HEK293 (cell line): ENCODE measurements at regions of chr6 and their contacts with region 1.

Region 1: DNA sequence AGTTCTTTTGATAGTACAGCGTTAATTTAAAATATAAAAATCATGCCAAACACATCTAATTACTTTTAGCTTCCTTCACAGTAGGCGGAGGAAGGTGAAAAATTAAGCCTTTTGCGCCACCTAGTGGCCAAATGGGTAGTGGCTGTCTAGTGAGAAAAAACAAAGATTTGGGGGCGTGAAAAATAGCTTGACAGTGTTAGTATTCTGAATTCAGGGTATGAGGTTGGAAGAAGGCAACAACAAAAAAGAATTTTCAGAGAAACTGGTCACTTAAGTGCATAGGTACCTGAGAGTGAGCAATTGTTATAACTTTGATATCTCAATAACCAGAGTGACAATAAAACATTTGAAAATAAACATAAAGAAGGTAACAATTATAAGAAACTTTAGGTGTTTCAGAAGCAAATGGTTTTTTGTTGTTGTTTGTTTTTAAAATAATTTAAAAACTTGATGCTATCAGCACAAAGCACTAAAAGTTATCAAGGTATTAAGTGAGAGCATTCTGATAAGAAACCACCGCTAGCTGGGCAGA is 14.3 kb downstream of the PSMB9 start:
- H3K4me3 ChIP-seq: no peak overlapping the region
- H3K27ac ChIP-seq: no peak overlapping the region
- H3K4me1 ChIP-seq: 0 out of 2 replicates have a peak, but pooled peaks cover 3% of the 10 kb centered on the region
- CTCF ChIP-seq: peak; percentile 63

Region 2: GRCh38 chr6:32501016-32501415 is 367.3 kb before region 1 on chr6:
- CTCF ChIA-PET with region 1: no interaction called
- POLR2A ChIA-PET with region 1: no interaction called
- H3K4me3 ChIP-seq: no peak overlapping the region
- H3K27ac ChIP-seq: no peak overlapping the region
- H3K4me1 ChIP-seq: no peaks in the 10 kb centered on the region
- CTCF ChIP-seq: no peak

Region 3: GRCh38 chr6:32614366-32615081 is 253.8 kb before region 1 on chr6:
- CTCF ChIA-PET with region 1: interaction called, 10 read pairs
- POLR2A ChIA-PET with region 1: no interaction called
- H3K4me3 ChIP-seq: no peak overlapping the region
- H3K27ac ChIP-seq: no peak overlapping the region
- H3K4me1 ChIP-seq: no peaks in the 10 kb centered on the region
- CTCF ChIP-seq: no peak

Region 4: DNA sequence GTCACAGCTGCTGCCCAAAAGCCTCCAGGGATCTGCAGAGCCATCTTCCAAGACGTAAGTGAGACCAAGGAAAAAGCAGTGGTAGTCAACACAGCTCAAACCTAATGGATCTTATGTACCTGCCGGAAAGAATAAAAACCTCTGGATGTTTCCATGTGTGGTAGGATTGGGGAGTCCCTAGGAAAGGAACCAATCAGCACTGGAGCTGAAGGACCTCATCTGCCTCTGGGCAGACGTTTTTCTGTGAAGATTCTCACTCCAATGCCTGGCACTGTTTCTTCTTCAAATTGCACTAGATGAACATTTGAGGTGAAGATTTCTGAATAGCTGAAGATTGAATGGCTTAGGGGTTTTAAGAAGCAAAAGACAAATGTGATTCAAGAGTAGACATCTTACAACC is 104.9 kb before region 1 on chr6 and contains the start of gene HLA-DQB2:
- CTCF ChIA-PET with region 1: no interaction called
- POLR2A ChIA-PET with region 1: no interaction called
- H3K4me3 ChIP-seq: no peak within 1 kb of the TSS
- H3K27ac ChIP-seq: no peak within 1 kb of the TSS
- H3K4me1 ChIP-seq: no peaks in the 10 kb centered on the region
- CTCF ChIP-seq: no peak

Region 5: GRCh38 chr6:32785781-32786533 is 82.4 kb before region 1 on chr6:
- CTCF ChIA-PET with region 1: interaction called, 49 read pairs
- POLR2A ChIA-PET with region 1: no interaction called
- H3K4me3 ChIP-seq: no peak overlapping the region
- H3K27ac ChIP-seq: no peak overlapping the region
- H3K4me1 ChIP-seq: no peaks in the 10 kb centered on the region
- CTCF ChIP-seq: peak; percentile 41; the same call in 1 of the 2 replicates

Region 6: GRCh38 chr6:32825966-32826365 is 42.4 kb before region 1 on chr6:
- CTCF ChIA-PET with region 1: interaction called, 116 read pairs
- POLR2A ChIA-PET with region 1: no interaction called
- H3K4me3 ChIP-seq: no peak overlapping the region
- H3K27ac ChIP-seq: no peak overlapping the region
- H3K4me1 ChIP-seq: no peaks in the 10 kb centered on the region
- CTCF ChIP-seq: peak; percentile 51; the same call in 1 of the 2 replicates

Region 7: DNA sequence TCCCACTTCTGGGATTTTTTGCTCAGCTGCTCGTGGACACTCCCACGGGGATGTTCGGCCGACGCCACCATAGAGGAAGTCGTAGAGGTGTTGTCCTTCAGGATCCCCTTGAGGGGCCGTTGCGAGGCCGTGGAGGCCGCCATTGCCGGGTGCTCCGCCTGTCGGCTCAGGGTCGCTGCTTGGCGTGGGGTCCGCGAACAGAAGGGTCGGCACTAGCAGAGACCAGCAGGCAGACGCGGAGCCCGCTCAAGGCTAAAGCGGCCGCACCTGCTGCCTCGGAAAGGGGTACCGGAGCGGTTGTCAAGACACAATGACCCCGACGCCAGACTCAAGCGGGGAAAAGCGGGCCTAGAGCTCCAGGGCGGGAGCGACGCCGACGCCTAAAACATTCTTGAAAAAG is 11.4 kb after region 1 on chr6:
- CTCF ChIA-PET with region 1: interaction called, 43 read pairs
- POLR2A ChIA-PET with region 1: no interaction called
- H3K4me3 ChIP-seq: no peak overlapping the region
- H3K27ac ChIP-seq: no peak overlapping the region
- H3K4me1 ChIP-seq: no peaks in the 10 kb centered on the region
- CTCF ChIP-seq: no peak

Region 8: DNA sequence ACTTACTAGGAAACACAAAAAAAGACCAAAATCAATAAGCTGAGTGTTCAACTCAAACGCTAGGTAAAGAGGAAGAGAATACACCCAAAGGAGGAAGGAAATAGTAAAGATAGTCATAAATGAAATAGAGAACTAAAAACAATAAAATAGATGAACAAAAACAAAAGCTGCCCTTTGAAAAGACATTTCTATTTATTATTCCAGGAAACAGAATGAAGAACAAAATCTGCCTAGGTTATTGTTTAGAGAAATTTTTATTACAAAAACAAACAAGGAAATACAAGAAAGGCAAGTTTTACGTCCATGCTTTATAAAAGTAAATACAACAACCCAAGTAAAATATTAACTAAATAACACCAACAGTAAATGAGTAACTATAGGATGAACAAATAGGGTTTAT is 52.4 kb after region 1 on chr6:
- CTCF ChIA-PET with region 1: no interaction called
- POLR2A ChIA-PET with region 1: no interaction called
- H3K4me3 ChIP-seq: no peak overlapping the region
- H3K27ac ChIP-seq: no peak overlapping the region
- H3K4me1 ChIP-seq: no peaks in the 10 kb centered on the region; the same call in 1 of the 2 replicates
- CTCF ChIP-seq: no peak

Region 9: GRCh38 chr6:32984605-32985389 is 116.5 kb after region 1 on chr6:
- CTCF ChIA-PET with region 1: interaction called, 58 read pairs
- POLR2A ChIA-PET with region 1: interaction called, 3 read pairs
- H3K4me3 ChIP-seq: no peak overlapping the region
- H3K27ac ChIP-seq: no peak overlapping the region
- H3K4me1 ChIP-seq: peaks cover 4% of the 10 kb centered on the region; the same call in 1 of the 2 replicates
- CTCF ChIP-seq: peak; percentile 85